B cell (primary cell): ENCODE measurements at regions of chr3 and their contacts with region 1.

Region 1: DNA sequence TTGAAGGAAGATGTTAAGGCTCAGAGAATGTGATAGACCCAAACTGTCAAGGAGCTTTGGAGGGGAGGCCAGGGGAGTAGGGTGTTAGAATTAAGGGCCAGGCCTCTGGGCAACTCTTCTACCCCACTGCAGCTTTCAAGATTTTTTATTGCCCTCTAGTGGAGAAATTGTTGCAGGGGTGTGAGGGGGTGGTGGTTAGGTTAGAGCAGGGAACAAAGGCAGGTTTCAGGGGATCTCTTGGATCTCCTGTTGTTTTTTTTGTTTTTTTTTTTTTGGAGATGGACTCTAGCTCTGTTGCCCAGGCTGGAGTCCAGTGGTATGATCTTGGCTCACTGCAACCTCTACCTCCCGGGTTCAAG is 1.4 kb upstream of the SEC13 start:
- DNase-seq: peak; percentile 55
- ATAC-seq: no peak
- H3K4me3 ChIP-seq: no peak overlapping the region
- H3K4me3 Mint-ChIP-seq: peak overlapping the region; percentile 26
- H3K27ac ChIP-seq: no peak overlapping the region
- H3K27ac Mint-ChIP-seq: peak overlapping the region; percentile 70
- H3K4me1 ChIP-seq: peaks cover 11 to 21% of the 10 kb centered on the region in 2 donors
- H3K4me1 Mint-ChIP-seq: peaks cover 26% of the 10 kb centered on the region
- H3K27me3 ChIP-seq: peaks cover 0 to 2% (median 0%) of the 10 kb centered on the region in 4 experiments
- H3K27me3 Mint-ChIP-seq: peaks cover 8% of the 10 kb centered on the region
- CTCF ChIP-seq: peak; percentile 56

Region 2: DNA sequence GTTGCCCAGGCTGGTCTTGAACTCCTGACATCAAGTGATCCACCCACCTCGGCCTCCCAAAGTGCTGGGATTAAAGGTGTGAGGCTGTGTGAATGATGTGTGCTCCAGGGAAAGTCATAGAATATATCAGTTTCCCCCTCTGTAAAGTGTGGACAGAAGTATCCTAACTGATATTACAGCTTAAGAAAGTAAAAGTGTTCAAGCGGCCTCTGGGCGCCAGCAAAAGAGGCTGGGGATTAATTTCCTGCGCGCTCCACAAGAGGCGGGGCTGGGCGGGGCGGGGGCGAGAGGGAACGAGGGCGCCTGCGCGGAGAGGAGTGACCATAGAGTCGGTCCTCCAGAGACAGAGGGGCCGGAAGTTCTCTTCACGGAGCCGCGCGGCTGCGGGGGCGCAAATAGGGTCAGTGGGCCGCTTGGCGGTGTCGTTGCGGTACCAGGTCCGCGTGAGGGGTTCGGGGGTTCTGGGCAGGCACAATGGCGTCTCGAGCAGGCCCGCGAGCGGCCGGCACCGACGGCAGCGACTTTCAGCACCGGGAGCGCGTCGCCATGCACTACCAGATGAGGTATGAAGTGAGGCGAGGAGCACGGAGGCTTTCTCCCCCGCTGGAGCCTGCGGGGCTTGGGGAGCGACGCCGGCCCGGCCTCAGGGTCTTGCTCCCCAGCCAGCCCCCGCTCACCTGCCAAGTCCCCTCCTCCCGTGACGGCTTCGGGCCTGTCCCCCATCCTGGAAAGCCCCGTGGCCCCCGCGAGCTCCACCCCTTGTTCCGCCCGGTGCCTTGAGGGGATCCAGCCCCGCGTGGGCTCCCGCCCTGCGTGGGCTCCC is 431.9 kb before region 1 on chr3 and contains the start of gene JAGN1:
- CTCF ChIA-PET with region 1: no interaction called
- POLR2A ChIA-PET with region 1: interaction called, 3 read pairs
- intact Hi-C with region 1: loop called (anchors 2 kb)
- DNase-seq: peak; percentile 95
- ATAC-seq: peak; percentile 84
- H3K4me3 ChIP-seq: peak within 1 kb of the TSS; percentile 81 to 99 (median 98)
- H3K4me3 Mint-ChIP-seq: peak within 1 kb of the TSS; percentile 99
- H3K27ac ChIP-seq: peak within 1 kb of the TSS; percentile 100
- H3K27ac Mint-ChIP-seq: peak within 1 kb of the TSS; percentile 99
- H3K4me1 ChIP-seq: peaks cover 17 to 24% of the 10 kb centered on the region in 2 donors
- H3K4me1 Mint-ChIP-seq: peaks cover 38% of the 10 kb centered on the region
- H3K27me3 ChIP-seq: no peaks in the 10 kb centered on the region
- H3K27me3 Mint-ChIP-seq: no peaks in the 10 kb centered on the region
- CTCF ChIP-seq: no peak
- total RNA-seq, gene JAGN1: 25.7 and 26.2 TPM in 2 replicates

Region 3: GRCh38 chr3:10142707-10143566 is 179.4 kb before region 1 on chr3:
- CTCF ChIA-PET with region 1: no interaction called
- POLR2A ChIA-PET with region 1: interaction called, 4 read pairs
- intact Hi-C with region 1: loop called (anchors 2 kb)
- DNase-seq: peak; percentile 31
- ATAC-seq: no peak
- H3K4me3 ChIP-seq: peak overlapping the region; percentile 8 to 91 (median 77)
- H3K4me3 Mint-ChIP-seq: peak overlapping the region; percentile 95
- H3K27ac ChIP-seq: peak overlapping the region; percentile 88 to 96
- H3K27ac Mint-ChIP-seq: peak overlapping the region; percentile 97
- H3K4me1 ChIP-seq: peaks cover 28 to 50% of the 10 kb centered on the region in 2 donors
- H3K4me1 Mint-ChIP-seq: peaks cover 32% of the 10 kb centered on the region
- H3K27me3 ChIP-seq: no peaks in the 10 kb centered on the region
- H3K27me3 Mint-ChIP-seq: no peaks in the 10 kb centered on the region
- CTCF ChIP-seq: no peak

Region 4: GRCh38 chr3:10389995-10390394 is 67.7 kb after region 1 on chr3:
- CTCF ChIA-PET with region 1: no interaction called
- POLR2A ChIA-PET with region 1: no interaction called
- intact Hi-C with region 1: loop called (anchors 2 kb)
- DNase-seq: peak; percentile 83
- ATAC-seq: peak; percentile 91
- H3K4me3 ChIP-seq: peak overlapping the region in 2 of 5 experiments; percentile 29 to 31
- H3K4me3 Mint-ChIP-seq: peak overlapping the region; percentile 17
- H3K27ac ChIP-seq: peak overlapping the region; percentile 81 to 89
- H3K27ac Mint-ChIP-seq: peak overlapping the region; percentile 95
- H3K4me1 ChIP-seq: peaks cover 54 to 92% of the 10 kb centered on the region in 2 donors
- H3K4me1 Mint-ChIP-seq: peaks cover 92% of the 10 kb centered on the region
- H3K27me3 ChIP-seq: no peaks in the 10 kb centered on the region
- H3K27me3 Mint-ChIP-seq: no peaks in the 10 kb centered on the region
- CTCF ChIP-seq: no peak